Calu3 (cell line): ENCODE measurements at regions of chr1 and their contacts with region 1.

Region 1: DNA sequence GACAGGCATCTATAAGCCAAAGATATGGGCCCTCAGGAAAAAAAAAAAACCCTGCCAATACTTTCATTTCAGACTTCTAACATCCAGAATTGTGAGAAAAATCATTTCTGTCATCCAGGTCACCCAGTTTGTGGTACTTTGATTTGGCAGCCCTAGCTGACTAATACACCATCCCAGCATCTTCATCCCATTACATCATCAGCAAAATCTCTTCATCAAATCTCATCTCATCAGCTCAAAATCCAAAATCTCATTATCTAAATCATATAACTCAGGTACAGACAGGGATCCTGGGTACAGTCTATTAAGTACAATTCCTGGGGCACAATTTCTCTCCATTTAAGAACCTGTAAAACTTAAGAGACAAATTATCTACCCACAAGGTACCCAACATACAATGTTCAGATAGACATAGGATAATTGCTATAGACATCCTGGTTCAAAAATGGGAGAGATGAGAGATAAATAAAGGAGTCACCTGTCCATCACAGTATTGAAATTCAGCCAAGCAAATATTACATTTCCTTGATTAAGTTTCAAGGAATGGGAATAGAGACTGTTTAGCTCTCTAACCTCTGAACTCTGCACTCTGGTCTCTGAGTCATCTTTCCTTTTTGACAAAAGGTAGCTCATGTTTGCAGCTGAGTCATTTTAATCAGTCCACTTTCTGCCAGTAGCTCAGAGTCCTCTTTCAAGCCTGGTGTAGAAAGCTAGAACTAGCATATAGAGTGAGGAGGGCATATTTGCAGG is 51.7 kb upstream of the GJA8 start:
- DNase-seq: peak; percentile 28
- H3K4me3 Mint-ChIP-seq: no peak overlapping the region
- H3K27ac Mint-ChIP-seq: no peak overlapping the region
- H3K4me1 Mint-ChIP-seq: peaks cover 31% of the 10 kb centered on the region
- H3K27me3 Mint-ChIP-seq: no peaks in the 10 kb centered on the region
- CTCF ChIP-seq: no peak

Region 2: DNA sequence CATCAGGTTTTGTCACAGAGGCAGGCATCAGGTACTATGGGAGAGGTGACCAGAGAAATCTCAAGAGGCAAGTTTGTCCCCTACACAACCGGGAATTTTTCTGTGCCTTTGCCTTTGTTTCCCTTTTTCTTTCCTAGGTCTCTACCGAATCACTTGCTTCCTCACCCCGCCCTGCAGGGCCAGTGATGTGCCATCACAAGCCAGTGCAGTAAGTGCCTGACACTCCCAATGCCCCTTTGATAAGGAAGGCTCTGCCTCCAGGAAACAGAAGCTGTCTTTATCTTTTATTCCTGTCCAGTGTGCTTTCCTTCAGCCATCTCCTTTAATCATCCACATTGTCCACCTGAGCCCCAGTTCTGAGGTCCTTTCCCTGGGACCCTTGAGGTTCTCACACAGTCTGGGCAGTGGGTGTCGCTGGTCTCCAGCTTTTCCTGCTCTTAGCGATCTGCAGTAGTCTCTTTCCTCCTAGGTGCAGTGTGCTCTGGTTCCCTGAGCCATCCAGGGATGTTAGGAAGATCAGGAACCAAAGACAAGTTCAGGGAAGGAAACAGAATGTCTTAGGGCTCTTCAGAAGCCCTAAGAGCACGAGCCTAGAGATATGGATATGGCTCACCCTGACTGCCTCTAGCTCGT is 127.1 kb before region 1 on chr1:
- CTCF ChIA-PET with region 1: no interaction called
- intact Hi-C with region 1: loop called (anchors 5 kb)
- DNase-seq: peak; percentile 74
- H3K4me3 Mint-ChIP-seq: no peak overlapping the region
- H3K27ac Mint-ChIP-seq: peak overlapping the region; percentile 1
- H3K4me1 Mint-ChIP-seq: peaks cover 47% of the 10 kb centered on the region
- H3K27me3 Mint-ChIP-seq: no peaks in the 10 kb centered on the region
- CTCF ChIP-seq: no peak

Region 3: DNA sequence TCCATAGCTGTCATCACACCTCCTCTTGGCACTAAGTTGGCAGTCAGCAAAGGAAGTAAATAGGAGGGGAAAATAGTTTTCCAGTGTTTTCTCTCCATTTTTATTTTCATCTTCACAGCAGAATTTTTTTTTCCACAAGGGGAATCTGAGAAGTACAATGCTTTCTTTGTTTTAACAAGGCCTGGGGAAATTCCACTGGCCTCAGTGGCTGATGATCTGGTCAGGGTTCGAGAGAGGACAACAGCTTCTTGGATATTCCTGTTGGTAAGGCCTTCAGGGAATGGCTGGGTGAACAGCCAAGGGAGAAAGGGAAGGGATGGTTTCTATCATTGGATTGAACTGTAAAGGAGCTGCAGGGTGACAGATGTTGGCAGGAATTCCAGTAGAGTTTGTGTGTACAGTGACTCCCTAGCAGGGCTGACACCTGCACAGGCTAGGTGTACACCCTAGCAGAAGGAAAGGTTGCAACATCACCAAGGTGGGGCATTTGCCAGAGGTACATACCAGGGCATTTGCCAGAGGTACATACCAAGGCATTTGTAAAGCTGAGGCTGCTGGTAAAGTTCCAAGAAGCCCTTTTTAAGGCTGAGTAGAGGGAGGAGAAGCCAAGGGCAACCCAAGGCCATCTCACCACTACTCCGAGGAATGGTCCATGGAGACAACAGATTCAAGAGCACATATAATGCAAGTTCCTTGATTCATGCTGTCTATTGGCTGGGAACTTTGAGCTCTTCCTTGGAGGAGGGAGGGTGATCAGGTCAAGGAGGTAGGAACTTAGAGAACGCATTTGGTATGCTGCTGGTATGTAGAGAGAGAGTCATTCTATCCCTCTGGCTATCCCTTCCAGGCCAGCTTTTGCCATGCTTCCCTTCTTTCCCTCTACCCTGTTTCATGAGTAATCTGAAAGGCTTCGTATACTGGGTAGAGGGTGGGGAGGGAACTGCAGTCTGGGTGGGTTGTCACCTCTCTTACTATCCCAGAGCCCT is 93.6 kb before region 1 on chr1:
- CTCF ChIA-PET with region 1: no interaction called
- intact Hi-C with region 1: loop called (anchors 5 kb)
- DNase-seq: peak; percentile 76
- H3K4me3 Mint-ChIP-seq: no peak overlapping the region
- H3K27ac Mint-ChIP-seq: peak overlapping the region; percentile 48
- H3K4me1 Mint-ChIP-seq: peaks cover 28% of the 10 kb centered on the region
- H3K27me3 Mint-ChIP-seq: no peaks in the 10 kb centered on the region
- CTCF ChIP-seq: no peak

Region 4: DNA sequence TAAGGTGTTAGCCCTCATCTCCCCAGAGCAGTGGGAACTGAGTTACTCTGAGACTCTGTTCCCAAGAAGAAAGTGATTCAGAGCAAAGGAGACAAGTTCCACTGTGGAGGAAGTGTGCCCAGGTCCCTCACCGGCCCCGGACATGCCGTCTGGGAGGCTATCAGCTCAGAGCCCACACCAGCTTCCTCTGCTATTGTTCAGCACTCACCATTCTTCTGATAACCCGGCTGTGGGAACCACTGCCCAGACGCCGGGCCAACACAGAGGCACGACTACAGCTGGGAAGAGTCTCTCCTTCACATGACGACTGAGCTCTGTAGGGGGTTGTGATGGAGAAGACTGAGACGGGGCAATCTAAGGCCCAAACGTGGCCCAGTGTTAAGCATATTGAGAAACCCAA is 56.4 kb before region 1 on chr1:
- CTCF ChIA-PET with region 1: no interaction called
- intact Hi-C with region 1: no loop called
- DNase-seq: no peak
- H3K4me3 Mint-ChIP-seq: no peak overlapping the region
- H3K27ac Mint-ChIP-seq: no peak overlapping the region
- H3K4me1 Mint-ChIP-seq: no peaks in the 10 kb centered on the region
- H3K27me3 Mint-ChIP-seq: no peaks in the 10 kb centered on the region
- CTCF ChIP-seq: no peak

Region 5: GRCh38 chr1:147808025-147808424 is 42.9 kb before region 1 on chr1:
- CTCF ChIA-PET with region 1: no interaction called
- intact Hi-C with region 1: loop called (anchors 5 kb)
- DNase-seq: no peak
- H3K4me3 Mint-ChIP-seq: no peak overlapping the region
- H3K27ac Mint-ChIP-seq: no peak overlapping the region
- H3K4me1 Mint-ChIP-seq: no peaks in the 10 kb centered on the region
- H3K27me3 Mint-ChIP-seq: no peaks in the 10 kb centered on the region
- CTCF ChIP-seq: no peak